Activated T-helper 1 cell treated with anti-CD3 and anti-CD28 coated beads, Interleukin-12 subunit alpha, Interleukin-12 subunit beta, Interleukin-2, Interleukin-4 antibody, amounts not matched to agents 30 ng/mL and 10 ng/mL and 1 ng/mL, durations not matched to agents 14 hours and 24 hours and 36 hours (primary cell): ENCODE measurements at regions of chr6 and their contacts with region 1.

Region 1: GRCh38 chr6:16657768-16658167 is 103.5 kb downstream of the ATXN1 start:
- DNase-seq: no peak
- H3K4me3 Mint-ChIP-seq: peak overlapping the region; percentile 70
- H3K27ac Mint-ChIP-seq: peak overlapping the region; percentile 88
- H3K4me1 Mint-ChIP-seq: peaks cover 64% of the 10 kb centered on the region
- H3K27me3 Mint-ChIP-seq: no peaks in the 10 kb centered on the region

Region 2: DNA sequence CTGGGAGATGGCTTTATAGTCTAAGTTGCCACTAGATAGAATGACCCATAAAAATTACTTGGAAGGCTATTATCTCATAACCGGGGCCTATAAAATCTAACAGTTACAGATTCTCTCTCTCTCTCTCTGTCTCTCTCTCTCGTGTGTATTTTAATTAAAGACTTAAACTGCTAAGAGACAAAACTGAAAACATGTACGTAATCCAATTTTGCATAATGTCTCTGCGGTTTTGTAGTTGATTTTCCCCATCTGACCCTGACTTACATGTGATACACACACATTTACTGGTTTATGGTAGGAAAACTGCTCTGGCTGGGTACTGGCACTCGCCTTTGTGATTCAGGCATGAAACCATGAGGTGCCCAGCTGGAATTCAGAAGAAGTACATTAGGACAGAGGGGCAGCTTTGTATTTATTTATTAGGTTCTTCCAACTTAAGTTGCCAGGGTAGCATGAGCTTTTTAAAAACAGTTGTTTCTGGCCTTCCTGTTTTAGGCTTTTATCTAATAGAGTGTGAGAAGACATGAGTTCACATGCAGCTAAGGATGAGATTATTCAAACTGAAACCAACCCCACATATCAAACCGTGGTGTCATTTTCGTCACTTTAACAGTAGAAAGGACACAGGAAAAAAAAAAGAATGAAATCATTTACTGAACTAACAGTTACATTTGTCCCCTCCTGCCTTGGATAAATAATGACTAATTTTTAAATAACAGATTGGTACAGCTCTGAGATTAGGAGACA is 236.9 kb before region 1 on chr6:
- intact Hi-C with region 1: loop called (anchors 1 kb)
- DNase-seq: peak; percentile 47
- H3K4me3 Mint-ChIP-seq: peak overlapping the region; percentile 73
- H3K27ac Mint-ChIP-seq: peak overlapping the region; percentile 95
- H3K4me1 Mint-ChIP-seq: peaks cover 63% of the 10 kb centered on the region
- H3K27me3 Mint-ChIP-seq: no peaks in the 10 kb centered on the region

Region 3: DNA sequence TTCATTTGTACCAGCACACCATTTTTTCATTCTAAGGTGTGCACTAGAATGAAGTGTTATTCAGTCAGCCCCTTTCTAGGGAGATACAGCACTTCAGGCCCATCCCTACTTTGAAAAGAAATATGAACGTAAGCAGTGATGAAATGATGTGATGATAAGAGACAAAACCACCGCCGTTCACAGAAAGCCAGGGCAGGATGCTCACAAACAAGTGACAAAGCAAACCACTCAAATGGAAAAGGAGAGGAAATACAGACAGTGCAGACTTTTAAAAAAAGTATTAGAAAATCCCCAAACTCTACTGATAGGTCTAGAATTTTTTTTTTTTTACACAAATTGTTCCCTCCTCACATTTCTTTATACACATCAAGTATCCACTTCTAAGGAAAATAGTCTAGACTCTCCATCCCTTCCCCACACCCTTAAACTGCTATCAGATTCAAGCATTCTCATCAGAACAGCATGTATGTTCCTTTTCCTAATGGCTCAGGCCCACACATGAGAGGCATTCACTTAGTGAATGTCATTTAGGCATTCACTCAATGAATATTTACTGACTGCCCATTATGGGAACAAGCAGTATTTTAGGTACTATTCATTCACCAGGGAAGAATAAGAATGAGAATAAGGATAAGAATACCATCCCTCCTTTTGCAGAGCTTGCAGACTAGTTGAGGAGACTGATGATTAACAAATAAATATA is 175.9 kb before region 1 on chr6:
- intact Hi-C with region 1: loop called (anchors 1 kb)
- DNase-seq: peak; percentile 74
- H3K4me3 Mint-ChIP-seq: peak overlapping the region; percentile 56
- H3K27ac Mint-ChIP-seq: peak overlapping the region; percentile 97
- H3K4me1 Mint-ChIP-seq: peaks cover 89% of the 10 kb centered on the region
- H3K27me3 Mint-ChIP-seq: no peaks in the 10 kb centered on the region

Region 4: DNA sequence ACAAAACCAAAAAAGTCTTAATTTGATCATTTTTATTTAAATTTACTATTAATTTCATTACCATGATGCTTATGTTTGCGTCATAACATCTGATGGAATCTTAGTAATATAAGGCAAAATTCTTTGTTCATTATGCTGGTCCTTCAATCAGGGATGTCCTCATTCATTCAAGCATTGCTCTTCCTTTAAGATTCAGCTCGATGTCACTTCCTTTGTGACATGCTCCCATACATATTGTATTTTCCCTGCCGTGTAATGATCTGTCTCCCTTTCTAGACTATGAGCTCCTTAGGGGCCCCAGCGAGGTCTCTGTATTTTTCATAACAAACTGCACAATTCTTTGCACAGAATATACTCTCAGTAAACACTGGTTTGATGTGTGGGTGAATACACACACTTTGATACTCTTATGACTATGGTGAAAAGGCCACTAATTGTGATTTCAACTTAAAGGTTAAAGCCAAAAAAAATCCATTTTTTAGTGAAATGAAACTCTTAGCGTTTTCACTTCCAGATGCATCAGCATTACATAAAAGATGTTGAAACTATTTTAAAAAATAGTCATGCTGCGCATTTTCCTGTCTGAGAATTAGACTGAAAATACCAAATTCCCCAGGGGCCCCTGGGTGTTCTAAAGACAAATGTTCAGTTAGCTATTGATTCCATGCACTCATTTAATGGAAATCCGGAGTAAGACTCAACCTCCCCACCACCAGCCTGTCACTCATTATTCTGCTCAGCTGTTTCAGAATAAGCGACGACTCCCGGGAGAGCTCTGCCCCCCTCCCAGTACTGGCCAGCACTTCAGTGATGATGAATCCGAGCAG is 66.2 kb before region 1 on chr6:
- intact Hi-C with region 1: loop called (anchors 1 kb)
- DNase-seq: no peak
- H3K4me3 Mint-ChIP-seq: no peak overlapping the region
- H3K27ac Mint-ChIP-seq: peak overlapping the region; percentile 87
- H3K4me1 Mint-ChIP-seq: peaks cover 38% of the 10 kb centered on the region
- H3K27me3 Mint-ChIP-seq: no peaks in the 10 kb centered on the region

Region 5: DNA sequence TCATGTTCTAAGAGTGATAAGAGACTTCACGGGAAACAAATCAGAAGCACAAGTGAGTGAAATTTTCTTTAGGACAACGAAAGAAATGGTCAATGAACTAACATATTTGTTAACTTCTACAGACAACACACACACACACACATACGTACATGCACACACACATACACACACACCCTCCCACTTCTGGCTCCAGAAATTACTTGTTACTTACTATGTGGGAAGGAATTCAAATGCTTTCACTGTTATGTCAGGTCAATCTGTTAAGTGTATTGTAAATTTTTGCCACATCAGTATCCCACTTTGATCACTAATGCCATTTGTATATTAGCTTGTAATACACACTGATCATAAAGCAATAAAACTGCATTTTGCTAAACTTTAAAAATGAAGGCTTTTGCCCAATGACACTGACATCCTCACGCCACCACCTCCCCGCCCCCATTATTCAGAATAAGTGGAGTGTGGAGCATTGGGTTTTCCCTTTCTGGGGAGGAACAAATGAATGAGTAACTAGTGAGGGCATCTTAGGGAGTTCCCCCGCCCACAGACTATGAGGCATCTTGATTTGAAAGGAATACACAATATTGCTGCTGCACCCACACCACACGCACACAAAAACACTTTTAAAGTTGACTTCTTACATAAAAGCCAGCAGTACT is 27.3 kb after region 1 on chr6:
- intact Hi-C with region 1: loop called (anchors 1 kb)
- DNase-seq: peak; percentile 71
- H3K4me3 Mint-ChIP-seq: peak overlapping the region; percentile 43
- H3K27ac Mint-ChIP-seq: peak overlapping the region; percentile 88
- H3K4me1 Mint-ChIP-seq: peaks cover 97% of the 10 kb centered on the region
- H3K27me3 Mint-ChIP-seq: no peaks in the 10 kb centered on the region

Region 6: DNA sequence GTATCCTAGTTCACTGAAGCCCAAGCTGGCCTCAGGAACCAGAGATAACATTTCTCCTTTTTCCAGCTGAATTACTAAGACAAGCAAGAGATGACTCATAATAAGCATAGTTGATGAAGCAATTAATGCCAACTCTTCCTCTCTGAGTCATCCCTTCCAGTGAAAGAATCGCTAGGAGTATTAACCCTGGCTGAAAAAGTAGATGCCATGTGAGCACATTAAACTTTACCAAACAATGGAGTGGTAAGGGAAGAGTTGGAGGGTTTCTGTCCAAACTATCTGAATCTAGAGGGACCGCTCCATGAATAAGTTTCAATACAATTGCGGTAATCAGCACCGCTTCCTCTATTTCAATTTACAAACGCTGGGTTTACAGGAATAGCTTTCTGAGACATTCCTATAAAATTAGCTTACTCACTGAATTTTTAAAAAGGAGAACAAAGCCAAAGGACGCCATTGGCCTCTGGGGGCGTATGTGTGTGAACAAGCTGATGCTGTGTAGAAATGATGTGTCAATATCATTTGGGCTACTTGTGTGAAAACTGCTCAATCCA is 55.2 kb after region 1 on chr6:
- intact Hi-C with region 1: loop called (anchors 1 kb)
- DNase-seq: no peak
- H3K4me3 Mint-ChIP-seq: peak overlapping the region; percentile 60
- H3K27ac Mint-ChIP-seq: peak overlapping the region; percentile 88
- H3K4me1 Mint-ChIP-seq: peaks cover 65% of the 10 kb centered on the region
- H3K27me3 Mint-ChIP-seq: no peaks in the 10 kb centered on the region

Region 7: DNA sequence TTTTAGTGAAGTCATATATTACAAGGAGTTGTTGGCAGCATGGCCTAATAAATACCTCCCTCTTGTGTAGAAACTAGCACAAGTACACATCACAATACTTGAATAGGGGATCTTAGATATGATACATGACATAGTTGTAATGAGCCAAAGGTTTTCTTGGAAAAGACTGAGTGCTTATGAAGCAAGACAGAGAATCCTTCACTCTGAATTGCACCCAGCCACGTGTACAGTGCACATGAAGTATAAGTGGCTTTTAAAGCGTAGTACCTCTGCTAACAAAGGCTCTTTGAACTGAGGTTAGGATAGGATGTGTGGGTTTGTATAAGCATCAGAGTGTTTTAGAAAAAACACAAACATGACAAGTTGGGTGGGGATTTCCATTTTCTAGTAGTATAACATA is 298.6 kb after region 1 on chr6:
- intact Hi-C with region 1: loop called (anchors 5 kb)
- DNase-seq: no peak
- H3K4me3 Mint-ChIP-seq: no peak overlapping the region
- H3K27ac Mint-ChIP-seq: peak overlapping the region; percentile 59
- H3K4me1 Mint-ChIP-seq: peaks cover 14% of the 10 kb centered on the region
- H3K27me3 Mint-ChIP-seq: peaks cover 3% of the 10 kb centered on the region